Esophagus squamous epithelium (tissue), 5 donors: ENCODE measurements at regions of chr20 and their contacts with region 1.

Region 1: DNA sequence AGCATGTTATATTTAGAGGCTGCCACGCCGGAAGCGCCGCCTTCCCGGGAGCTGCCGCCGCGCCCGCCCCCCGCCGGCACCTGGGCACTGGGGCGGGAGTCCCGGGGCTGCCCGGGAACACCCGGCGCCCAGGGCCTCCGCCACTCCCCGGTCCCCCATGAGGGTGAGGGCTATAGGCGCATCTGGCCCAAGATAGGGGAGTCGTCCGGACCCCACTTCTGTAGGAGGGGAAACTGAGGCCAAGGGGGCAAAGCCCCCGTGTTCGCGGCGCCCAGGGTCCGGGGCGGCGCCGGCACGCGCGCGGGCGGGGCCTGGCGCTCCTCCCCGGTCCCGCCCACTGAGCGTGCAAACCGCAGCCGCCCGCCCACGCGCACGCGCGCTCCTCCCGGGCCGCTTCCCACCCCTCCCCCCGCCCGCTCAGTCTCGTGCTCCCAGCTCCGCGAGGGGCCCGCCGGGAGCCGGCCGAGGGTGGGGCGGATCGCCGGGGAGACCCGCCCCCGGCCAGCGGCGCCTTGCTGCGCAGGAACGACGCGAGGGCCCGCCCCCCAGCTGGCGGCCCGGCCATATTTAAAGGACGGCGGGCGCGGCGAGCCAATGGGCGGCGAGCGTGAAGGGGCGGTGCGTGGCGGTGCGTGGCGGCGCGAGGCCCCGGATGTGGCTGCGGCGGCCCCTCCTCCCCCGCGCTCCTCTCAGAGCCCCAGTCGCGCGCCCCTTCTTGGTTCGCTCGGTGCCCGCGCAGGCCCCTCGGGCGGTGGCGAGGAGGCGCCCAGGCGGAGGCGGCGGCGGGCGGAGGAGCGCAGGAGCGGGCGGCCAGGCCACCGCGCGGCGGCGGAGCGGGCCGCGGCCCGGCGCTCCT is at the start of gene LSM14B:
- DNase-seq: peak; percentile 92
- H3K4me3 ChIP-seq: peak within 1 kb of the TSS; percentile 64 to 97 (median 83)
- H3K27ac ChIP-seq: peak within 1 kb of the TSS; percentile 93 to 99 (median 95)
- H3K4me1 ChIP-seq: peaks cover 13 to 31% (median 14%) of the 10 kb centered on the region in 3 donors
- H3K27me3 ChIP-seq: peaks cover 0 to 28% (median 0%) of the 10 kb centered on the region in 4 donors
- CTCF ChIP-seq: peak in 2 of 6 experiments; percentile 6 to 14
- POLR2A ChIP-seq: peak in 3 of 4 donors; percentile 39 to 61 (median 57)
- total RNA-seq, gene LSM14B: 18.1 to 30.5 (median 21.7) TPM

Region 2: DNA sequence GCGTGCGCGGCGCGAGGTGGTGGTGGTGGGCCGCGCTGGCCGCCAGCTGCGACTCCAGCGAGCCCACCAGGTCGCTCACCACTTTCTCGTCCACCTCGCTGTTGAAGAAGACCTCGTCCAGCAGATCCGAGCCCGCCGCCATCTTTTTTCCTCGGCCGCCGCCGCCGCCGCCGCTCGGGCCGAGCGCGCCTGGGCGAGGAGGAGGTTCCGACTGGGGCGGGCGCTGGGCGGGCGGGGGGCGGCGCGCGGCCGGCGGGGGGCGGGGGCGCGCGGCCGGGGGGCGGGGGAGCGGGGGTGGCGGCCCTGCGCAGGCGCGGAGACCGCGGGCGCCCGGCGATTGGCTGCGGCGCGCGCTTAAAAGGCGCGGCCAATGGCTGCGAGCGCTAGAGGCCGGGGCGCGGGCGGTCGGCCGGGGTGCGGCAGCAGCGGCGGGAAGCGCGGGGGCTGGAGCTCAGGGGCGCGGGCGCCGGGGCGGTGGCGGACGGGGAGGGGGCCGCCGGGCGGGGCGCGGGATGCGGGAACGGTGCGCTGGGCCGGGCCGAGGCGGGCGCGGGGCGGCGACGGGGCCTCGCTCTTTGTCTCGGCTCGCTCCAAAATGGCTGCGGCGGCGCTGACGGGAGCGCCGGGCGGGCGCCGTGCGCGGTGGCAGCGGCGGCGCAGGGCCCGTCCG is 56.2 kb before region 1 on chr20 and contains the start of gene TAF4:
- intact Hi-C with region 1: loop called (anchors 5 kb)
- DNase-seq: no peak
- H3K4me3 ChIP-seq: peak within 1 kb of the TSS; percentile 65 to 87 (median 79)
- H3K27ac ChIP-seq: peak within 1 kb of the TSS; percentile 80 to 99 (median 96)
- H3K4me1 ChIP-seq: peaks cover 15 to 54% (median 25%) of the 10 kb centered on the region in 3 donors
- H3K27me3 ChIP-seq: no peaks in the 10 kb centered on the region
- CTCF ChIP-seq: no peak
- POLR2A ChIP-seq: peak in 2 of 4 donors; percentile 87 to 90
- total RNA-seq, gene TAF4: 4.9 to 16.5 (median 14.4) TPM

Region 3: GRCh38 chr20:62079166-62079565 is 42.8 kb before region 1 on chr20:
- intact Hi-C with region 1: loop called (anchors 5 kb)
- DNase-seq: no peak
- H3K4me3 ChIP-seq: no peak overlapping the region
- H3K27ac ChIP-seq: no peak overlapping the region
- H3K4me1 ChIP-seq: no peaks in the 10 kb centered on the region
- H3K27me3 ChIP-seq: peaks cover 0 to 31% (median 0%) of the 10 kb centered on the region in 4 donors
- CTCF ChIP-seq: no peak
- POLR2A ChIP-seq: no peak

Region 4: GRCh38 chr20:62523473-62524203 is 401.6 kb after region 1 on chr20:
- intact Hi-C with region 1: no loop called
- DNase-seq: no peak
- H3K4me3 ChIP-seq: no peak overlapping the region
- H3K27ac ChIP-seq: no peak overlapping the region
- H3K4me1 ChIP-seq: peaks cover 0 to 16% (median 3%) of the 10 kb centered on the region in 3 donors
- H3K27me3 ChIP-seq: peaks cover 0 to 84% (median 0%) of the 10 kb centered on the region in 4 donors
- CTCF ChIP-seq: no peak
- POLR2A ChIP-seq: no peak